GM10248 (cell line): ENCODE measurements at regions of chr12 and their contacts with region 1.

Region 1: GRCh38 chr12:51341259-51342007 is 5.0 kb downstream of the CELA1 start:
- DNase-seq: peak; percentile 73
- CTCF ChIP-seq: peak; percentile 98

Region 2: GRCh38 chr12:50825372-50825838 is 516.0 kb before region 1 on chr12:
- CTCF ChIA-PET with region 1: interaction called, 15 read pairs
- POLR2A ChIA-PET with region 1: no interaction called
- DNase-seq: peak; percentile 49
- CTCF ChIP-seq: peak; percentile 32

Region 3: GRCh38 chr12:51171884-51172514 is 169.4 kb before region 1 on chr12:
- CTCF ChIA-PET with region 1: no interaction called
- POLR2A ChIA-PET with region 1: no interaction called
- DNase-seq: peak; percentile 29
- CTCF ChIP-seq: no peak

Region 4: DNA sequence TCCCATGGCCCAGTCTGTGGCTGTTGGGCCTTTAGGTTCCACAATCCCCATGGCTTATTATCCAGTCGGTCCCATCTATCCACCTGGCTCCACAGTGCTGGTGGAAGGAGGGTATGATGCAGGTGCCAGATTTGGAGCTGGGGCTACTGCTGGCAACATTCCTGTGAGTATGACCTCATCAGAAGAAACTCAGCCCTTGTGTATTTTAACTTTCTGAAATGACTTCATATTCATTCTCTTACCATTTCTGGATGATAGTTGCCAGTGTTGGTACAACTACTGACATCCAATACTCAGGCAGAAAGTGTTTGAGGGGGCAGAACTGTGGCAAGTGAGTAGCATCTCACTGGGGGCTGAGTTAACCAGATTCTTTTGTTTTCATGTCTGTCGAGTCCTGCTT is 100.5 kb before region 1 on chr12:
- CTCF ChIA-PET with region 1: interaction called, 10 read pairs
- POLR2A ChIA-PET with region 1: no interaction called
- DNase-seq: no peak
- CTCF ChIP-seq: no peak

Region 5: GRCh38 chr12:51262758-51263177 is 78.7 kb before region 1 on chr12:
- CTCF ChIA-PET with region 1: interaction called, 35 read pairs
- POLR2A ChIA-PET with region 1: no interaction called
- DNase-seq: no peak
- CTCF ChIP-seq: peak; percentile 16

Region 6: GRCh38 chr12:51293696-51294095 is 47.7 kb before region 1 on chr12:
- CTCF ChIA-PET with region 1: interaction called, 10 read pairs
- POLR2A ChIA-PET with region 1: no interaction called
- DNase-seq: no peak
- CTCF ChIP-seq: no peak

Region 7: GRCh38 chr12:51351913-51352532 is 10.6 kb after region 1 on chr12:
- CTCF ChIA-PET with region 1: interaction called, 128 read pairs
- POLR2A ChIA-PET with region 1: no interaction called
- DNase-seq: no peak
- CTCF ChIP-seq: peak; percentile 42